ENCODE measurements at regions of chr10 and their contacts with region 1.

Region 1: DNA sequence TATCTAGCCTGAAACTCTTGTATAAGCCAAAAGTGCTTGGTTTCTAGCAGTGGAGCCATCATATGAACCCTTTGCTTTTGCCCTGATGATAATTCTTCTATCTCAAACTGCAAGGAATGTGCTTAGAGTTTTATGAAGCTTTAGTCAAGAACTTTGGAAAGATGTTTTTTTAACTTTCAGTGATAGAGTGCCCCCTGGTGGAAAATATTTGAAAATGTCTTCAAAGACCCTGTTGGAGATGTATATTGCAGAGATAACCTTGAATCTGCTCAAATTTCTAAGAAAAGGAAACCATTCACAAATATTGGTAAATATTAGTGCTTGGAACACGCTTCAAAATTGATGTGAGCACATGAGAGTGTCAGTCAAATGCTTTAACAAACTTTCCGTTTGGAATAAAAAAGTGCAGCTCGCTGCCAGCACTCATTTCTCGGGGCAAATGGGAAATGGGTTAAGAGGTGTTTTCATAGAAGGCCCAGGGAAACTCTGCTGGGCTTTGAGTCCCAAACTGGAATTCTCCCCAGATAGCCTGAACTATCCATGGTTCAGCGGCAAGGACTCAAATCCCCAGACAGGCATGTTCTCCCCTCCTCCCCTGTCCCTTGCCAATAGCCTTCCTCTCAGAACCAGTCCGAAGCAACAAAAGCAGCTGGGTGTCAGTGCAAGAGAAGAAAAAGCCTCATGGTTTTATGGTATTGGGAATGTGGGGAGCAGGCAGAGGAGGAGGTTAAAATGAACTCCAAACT is 129.3 kb downstream of the MYOF start:
- DNase-seq: no peak
- ATAC-seq: peak; percentile 45; the same call in 1 of the 3 replicates
- H3K4me3 ChIP-seq: no peak overlapping the region
- H3K27ac ChIP-seq: no peak overlapping the region
- H3K4me1 ChIP-seq: peaks cover 8% of the 10 kb centered on the region
- H3K27me3 ChIP-seq: peaks cover 1 to 4% of the 10 kb centered on the region in 2 experiments; a peak in 2 of 4 replicates
- CTCF ChIP-seq: peak; percentile 38 to 57 (median 46); a peak in 4 of 6 replicates
- EP300 ChIP-seq: no peak
- POLR2A ChIP-seq: no peak
- RAD21 ChIP-seq: peak; percentile 74

Region 2: GRCh38 chr10:92886334-92886961 is 466.4 kb before region 1 on chr10:
- CTCF ChIA-PET with region 1: interaction called, 24 read pairs
- POLR2A ChIA-PET with region 1: no interaction called
- RAD21 ChIA-PET with region 1: interaction called, 4 read pairs
- SMC1A ChIA-PET with region 1: interaction called, 6 read pairs
- in situ Hi-C with region 1: loop called (anchors 5 kb)
- intact Hi-C with region 1: loop called (anchors 5 kb)
- DNase-seq: no peak
- ATAC-seq: peak; percentile 68
- H3K4me3 ChIP-seq: no peak overlapping the region
- H3K27ac ChIP-seq: no peak overlapping the region
- H3K4me1 ChIP-seq: no peaks in the 10 kb centered on the region
- H3K27me3 ChIP-seq: no peaks in the 10 kb centered on the region
- CTCF ChIP-seq: no peak
- EP300 ChIP-seq: no peak
- POLR2A ChIP-seq: no peak
- RAD21 ChIP-seq: no peak

Region 3: GRCh38 chr10:93006435-93007039 is 346.3 kb before region 1 on chr10:
- CTCF ChIA-PET with region 1: interaction called, 8 read pairs
- POLR2A ChIA-PET with region 1: no interaction called
- RAD21 ChIA-PET with region 1: interaction called, 4 read pairs
- SMC1A ChIA-PET with region 1: interaction called, 3 read pairs
- in situ Hi-C with region 1: no loop called
- intact Hi-C with region 1: loop called (anchors 2 kb)
- DNase-seq: no peak
- ATAC-seq: peak; percentile 49; the same call in 1 of the 3 replicates
- H3K4me3 ChIP-seq: no peak overlapping the region
- H3K27ac ChIP-seq: no peak overlapping the region
- H3K4me1 ChIP-seq: no peaks in the 10 kb centered on the region
- H3K27me3 ChIP-seq: no peaks in the 10 kb centered on the region
- CTCF ChIP-seq: peak; percentile 51 to 52 (median 52); a peak in 4 of 6 replicates
- EP300 ChIP-seq: no peak
- POLR2A ChIP-seq: no peak
- RAD21 ChIP-seq: peak; percentile 62

Region 4: DNA sequence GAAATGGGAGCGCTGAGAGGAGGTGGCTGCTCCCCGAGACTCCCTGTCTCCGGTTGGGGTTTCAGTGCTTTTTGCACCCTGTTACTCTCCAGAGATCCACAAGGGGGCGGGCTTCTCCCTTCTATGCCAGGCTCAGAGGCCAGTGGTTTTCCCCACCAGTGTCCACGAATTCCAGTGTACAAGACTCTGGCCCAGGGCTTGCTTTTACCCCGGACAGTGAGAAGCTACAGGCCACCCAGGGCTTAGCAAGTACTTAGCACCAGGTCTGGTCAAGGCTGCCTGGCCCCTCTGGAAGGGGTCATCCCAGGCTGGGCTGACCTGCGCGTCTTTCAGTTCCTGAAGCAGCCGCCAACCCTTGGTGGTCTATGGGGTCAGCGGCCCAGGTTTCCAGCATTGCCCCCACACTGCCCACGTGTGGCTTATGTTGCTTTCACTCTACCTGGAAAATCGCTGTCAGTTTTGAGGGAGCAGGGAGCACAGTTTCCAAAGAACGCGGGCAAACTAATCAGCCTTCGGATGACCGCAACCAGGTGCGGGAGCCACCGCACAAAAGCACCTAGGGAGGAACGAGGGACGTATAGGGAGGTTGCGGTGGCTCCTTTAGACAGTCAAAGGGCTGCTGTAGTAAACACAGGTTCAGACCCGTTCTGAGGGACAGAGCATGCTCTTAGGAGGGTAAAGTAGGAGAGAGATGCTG is 272.3 kb before region 1 on chr10:
- CTCF ChIA-PET with region 1: interaction called, 44 read pairs
- POLR2A ChIA-PET with region 1: no interaction called
- RAD21 ChIA-PET with region 1: interaction called, 7 read pairs
- SMC1A ChIA-PET with region 1: interaction called, 6 read pairs
- in situ Hi-C with region 1: loop called (anchors 5 kb)
- intact Hi-C with region 1: loop called (anchors 1 kb)
- DNase-seq: no peak
- ATAC-seq: peak; percentile 87
- H3K4me3 ChIP-seq: no peak overlapping the region
- H3K27ac ChIP-seq: no peak overlapping the region
- H3K4me1 ChIP-seq: peaks cover 5% of the 10 kb centered on the region
- H3K27me3 ChIP-seq: peaks cover 4 to 5% of the 10 kb centered on the region in 2 experiments; a peak in 2 of 4 replicates
- CTCF ChIP-seq: peak; percentile 76 to 85 (median 83)
- EP300 ChIP-seq: no peak
- POLR2A ChIP-seq: no peak
- RAD21 ChIP-seq: peak; percentile 90

Region 5: DNA sequence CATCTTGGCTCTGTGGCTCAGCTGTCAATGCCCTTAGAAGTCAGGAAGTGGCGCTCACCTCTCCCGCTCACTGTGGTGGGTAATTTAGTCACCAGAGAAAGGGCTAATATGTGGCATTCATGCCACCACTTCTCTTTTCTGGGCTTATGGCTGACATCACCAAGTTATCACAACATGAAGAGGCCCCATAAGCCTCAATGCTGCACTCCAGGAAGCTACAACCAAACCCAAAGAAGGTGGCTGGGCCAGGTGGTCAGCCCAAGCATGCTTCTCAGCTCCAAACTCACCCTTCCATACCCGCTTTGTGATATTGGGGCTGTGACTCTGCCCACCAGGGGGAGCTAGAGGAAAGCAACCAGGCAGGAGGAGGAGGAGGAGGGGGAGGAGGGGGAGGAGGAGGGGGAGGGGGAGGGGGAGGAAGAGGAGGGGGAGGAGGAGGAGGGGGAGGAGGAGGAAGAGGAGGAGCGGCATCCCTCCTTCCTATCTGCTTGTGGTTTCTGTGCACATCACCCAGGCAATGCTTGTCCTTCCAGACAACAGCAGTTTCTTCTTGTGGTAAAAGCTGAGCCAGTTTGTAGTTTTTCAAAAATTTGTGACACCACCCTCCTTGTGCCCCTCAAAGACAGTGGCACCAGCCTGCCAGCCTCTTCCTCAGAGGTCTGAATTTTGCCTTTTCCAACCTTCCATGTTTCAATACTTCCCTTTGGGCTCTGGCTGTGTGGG is 237.0 kb before region 1 on chr10:
- CTCF ChIA-PET with region 1: interaction called, 18 read pairs
- POLR2A ChIA-PET with region 1: no interaction called
- RAD21 ChIA-PET with region 1: interaction called, 10 read pairs
- SMC1A ChIA-PET with region 1: interaction called, 14 read pairs
- in situ Hi-C with region 1: no loop called
- intact Hi-C with region 1: loop called (anchors 2 kb)
- DNase-seq: peak; percentile 32
- ATAC-seq: peak; percentile 96
- H3K4me3 ChIP-seq: no peak overlapping the region
- H3K27ac ChIP-seq: no peak overlapping the region
- H3K4me1 ChIP-seq: peaks cover 8% of the 10 kb centered on the region; the same call in 1 of the 2 replicates
- H3K27me3 ChIP-seq: no peaks in the 10 kb centered on the region
- CTCF ChIP-seq: peak; percentile 61 to 72 (median 62)
- EP300 ChIP-seq: no peak
- POLR2A ChIP-seq: no peak
- RAD21 ChIP-seq: peak; percentile 83

Region 6: DNA sequence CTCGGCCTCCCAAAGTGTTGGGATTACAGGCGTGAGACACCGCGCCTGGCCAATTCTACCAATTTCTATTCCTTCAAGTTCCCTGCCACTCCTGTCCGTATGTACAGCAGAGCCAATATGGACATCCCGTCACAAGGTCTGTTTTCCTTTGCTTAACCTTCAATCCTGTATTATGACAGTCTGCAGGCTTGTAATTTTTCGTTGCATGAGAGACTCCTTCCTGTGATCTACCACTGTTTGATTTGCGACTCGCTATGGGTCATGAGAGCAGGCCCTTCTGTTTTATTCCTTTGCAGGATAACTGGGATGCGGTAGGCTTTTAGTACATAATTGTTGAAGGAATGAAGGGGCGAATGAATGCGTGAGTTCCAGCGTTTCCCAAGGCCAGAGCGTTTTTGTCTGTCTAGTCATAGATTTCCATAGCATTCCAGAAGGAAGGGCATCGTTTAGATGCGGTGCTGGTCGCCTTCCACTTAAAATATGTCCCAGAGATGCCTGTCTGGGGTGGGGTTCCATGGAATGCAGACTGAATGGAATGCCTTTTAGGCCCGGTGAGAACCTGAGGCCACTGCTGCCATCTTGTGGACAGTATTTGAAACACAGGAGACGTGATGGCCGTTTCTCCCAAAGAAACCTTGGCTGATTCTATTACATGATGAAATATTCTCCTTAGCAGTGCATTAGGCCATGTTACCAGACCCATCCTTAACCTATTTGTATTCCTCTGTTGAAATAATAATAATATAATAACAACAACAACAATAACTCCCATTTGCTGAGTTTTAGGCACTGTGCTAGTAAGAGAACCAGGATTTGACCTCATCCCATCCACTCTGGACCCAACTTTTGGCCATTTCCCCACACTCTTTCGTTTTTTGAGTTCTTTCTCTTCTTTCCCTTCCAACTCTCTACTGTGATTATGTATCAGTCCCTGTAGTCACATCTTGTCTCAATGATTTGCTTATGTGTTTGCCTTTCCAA is 63.9 kb before region 1 on chr10:
- CTCF ChIA-PET with region 1: interaction called, 4 read pairs
- POLR2A ChIA-PET with region 1: no interaction called
- RAD21 ChIA-PET with region 1: interaction called, 4 read pairs
- SMC1A ChIA-PET with region 1: interaction called, 5 read pairs
- in situ Hi-C with region 1: no loop called
- intact Hi-C with region 1: loop called (anchors 5 kb)
- DNase-seq: no peak
- ATAC-seq: peak; percentile 70
- H3K4me3 ChIP-seq: no peak overlapping the region
- H3K27ac ChIP-seq: no peak overlapping the region
- H3K4me1 ChIP-seq: no peaks in the 10 kb centered on the region
- H3K27me3 ChIP-seq: 0 out of 4 replicates have a peak, but pooled peaks cover 0 to 2% of the 10 kb centered on the region in 2 experiments
- CTCF ChIP-seq: peak; percentile 61 to 72 (median 70)
- EP300 ChIP-seq: no peak
- POLR2A ChIP-seq: no peak
- RAD21 ChIP-seq: peak; percentile 88

Region 7: DNA sequence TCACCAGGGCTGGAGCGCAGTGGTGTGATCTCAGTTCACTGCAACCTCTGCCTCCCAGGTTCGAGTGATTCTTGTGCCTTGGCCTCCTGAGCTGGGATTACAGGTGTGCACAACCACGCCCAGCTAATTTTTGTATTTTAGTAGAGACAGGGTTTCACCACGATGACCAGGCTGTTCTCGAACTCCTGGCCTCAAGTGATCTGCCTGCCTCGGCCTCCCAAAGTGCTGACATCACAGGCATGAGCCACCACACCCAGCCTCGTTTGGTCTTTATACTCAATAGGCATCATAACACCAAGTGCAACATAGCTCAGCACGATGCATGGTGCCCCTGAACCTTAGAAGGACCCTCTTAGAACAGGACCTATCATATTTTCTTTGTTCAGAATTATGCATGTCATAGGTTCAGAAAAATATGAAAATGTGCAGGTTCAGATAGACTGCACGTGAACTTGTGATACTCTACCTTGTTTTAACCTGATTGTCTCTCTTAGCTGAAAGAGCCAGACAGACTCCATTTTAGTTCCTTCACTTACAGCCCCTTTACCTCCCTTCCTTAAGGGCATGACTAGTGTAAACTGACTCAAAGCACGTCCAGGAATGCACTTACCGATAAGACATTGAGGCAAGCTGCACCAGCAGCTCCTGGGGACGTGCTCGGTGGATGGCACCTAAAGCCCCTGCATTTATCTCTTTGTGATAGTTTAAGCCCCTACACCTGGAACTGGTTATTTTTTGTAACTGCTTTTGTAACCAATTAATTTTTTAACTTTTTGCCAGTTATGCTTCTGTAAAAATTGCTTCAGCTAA is 94.2 kb after region 1 on chr10:
- CTCF ChIA-PET with region 1: no interaction called
- POLR2A ChIA-PET with region 1: no interaction called
- RAD21 ChIA-PET with region 1: no interaction called
- SMC1A ChIA-PET with region 1: no interaction called
- in situ Hi-C with region 1: no loop called
- intact Hi-C with region 1: no loop called
- DNase-seq: no peak
- ATAC-seq: no peak
- H3K4me3 ChIP-seq: no peak overlapping the region
- H3K27ac ChIP-seq: no peak overlapping the region
- H3K4me1 ChIP-seq: no peaks in the 10 kb centered on the region
- H3K27me3 ChIP-seq: no peaks in the 10 kb centered on the region
- CTCF ChIP-seq: no peak
- EP300 ChIP-seq: no peak
- POLR2A ChIP-seq: no peak
- RAD21 ChIP-seq: no peak